Gastrocnemius medialis (tissue), 4 donors: ENCODE measurements at regions of chrX and their contacts with region 1.

Region 1: DNA sequence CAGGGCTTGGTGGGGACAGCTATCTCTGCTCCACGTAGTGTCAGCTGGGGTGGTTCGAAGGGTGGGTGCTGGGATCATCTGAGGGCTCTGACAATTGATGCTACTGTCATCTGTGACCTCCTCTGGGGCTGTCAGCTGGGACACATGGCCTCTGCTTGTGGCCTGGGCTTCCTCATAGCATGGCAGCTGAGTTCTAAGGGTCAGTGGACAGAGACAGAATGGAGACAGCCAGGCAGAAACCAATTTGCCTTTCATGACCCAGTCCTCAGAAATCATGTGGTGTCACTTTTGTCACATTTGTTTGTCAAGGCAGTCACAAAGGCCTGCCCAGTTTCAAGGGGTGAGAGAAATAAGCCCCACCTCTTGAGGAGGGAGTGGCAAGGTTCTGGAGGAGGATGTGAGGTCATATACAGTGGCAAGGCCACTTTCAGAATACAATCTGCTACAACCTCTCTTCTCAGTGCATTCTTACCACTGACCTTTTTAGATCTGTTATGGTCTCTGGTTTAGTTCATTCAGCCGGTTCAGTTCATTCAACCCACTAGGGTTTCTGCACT is 103.6 kb upstream of the BCOR start:
- DNase-seq: no peak
- ATAC-seq: no peak
- H3K4me3 ChIP-seq: no peak overlapping the region
- H3K27ac ChIP-seq: no peak overlapping the region
- H3K4me1 ChIP-seq: no peaks in the 10 kb centered on the region
- H3K27me3 ChIP-seq: no peaks in the 10 kb centered on the region
- CTCF ChIP-seq: no peak
- POLR2A ChIP-seq: no peak

Region 2: GRCh38 chrX:40314070-40314469 is 112.7 kb after region 1 on chrX:
- in situ Hi-C with region 1: loop called in 1 of 4 experiments (anchors 25 kb)
- intact Hi-C with region 1: no loop called
- DNase-seq: no peak
- ATAC-seq: no peak
- H3K4me3 ChIP-seq: no peak overlapping the region
- H3K27ac ChIP-seq: no peak overlapping the region
- H3K4me1 ChIP-seq: no peaks in the 10 kb centered on the region
- H3K27me3 ChIP-seq: no peaks in the 10 kb centered on the region
- CTCF ChIP-seq: no peak
- POLR2A ChIP-seq: no peak